Activated naive CD4-positive, alpha-beta T cell treated with anti-CD3 and anti-CD28 coated beads for 36 hours (primary cell): ENCODE measurements at regions of chr1 and their contacts with region 1.

Region 1: DNA sequence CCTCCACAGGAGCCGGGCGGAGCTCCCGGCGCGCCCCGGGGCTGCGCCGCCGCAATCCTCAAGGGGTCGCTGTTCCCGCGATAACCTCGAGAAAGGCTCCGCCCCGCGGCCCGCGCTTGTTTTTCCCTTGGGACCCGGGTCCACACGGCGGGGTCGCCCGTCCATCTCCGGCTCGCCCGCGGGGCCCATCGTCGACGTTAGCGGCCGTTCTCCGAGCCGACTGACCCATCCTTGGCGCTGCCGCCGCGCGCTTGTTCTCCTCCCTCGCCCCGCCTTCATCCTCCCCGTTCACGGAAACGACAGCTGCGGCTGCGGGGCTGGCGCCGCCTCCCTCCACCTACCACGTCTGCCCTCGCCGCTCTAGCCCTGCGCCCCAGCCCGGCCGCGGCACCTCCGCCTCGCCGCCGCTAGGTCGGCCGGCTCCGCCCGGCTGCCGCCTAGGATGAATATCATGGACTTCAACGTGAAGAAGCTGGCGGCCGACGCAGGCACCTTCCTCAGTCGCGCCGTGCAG is at the start of gene SH3GLB1:
- DNase-seq: peak; percentile 90
- H3K4me3 Mint-ChIP-seq: peak within 1 kb of the TSS; percentile 93
- H3K27ac Mint-ChIP-seq: peak within 1 kb of the TSS; percentile 98
- H3K4me1 Mint-ChIP-seq: peaks cover 40% of the 10 kb centered on the region
- H3K27me3 Mint-ChIP-seq: no peaks in the 10 kb centered on the region
- total RNA-seq, gene SH3GLB1: 45.0 to 45.5 TPM

Region 2: GRCh38 chr1:85707990-85708828 is 996.3 kb before region 1 on chr1 and contains the start of gene ZNHIT6:
- CTCF ChIA-PET with region 1: no interaction called
- intact Hi-C with region 1: loop called (anchors 1 kb)
- DNase-seq: peak; percentile 93
- H3K4me3 Mint-ChIP-seq: no peak within 1 kb of the TSS
- H3K27ac Mint-ChIP-seq: no peak within 1 kb of the TSS
- H3K4me1 Mint-ChIP-seq: peaks cover 21% of the 10 kb centered on the region
- H3K27me3 Mint-ChIP-seq: no peaks in the 10 kb centered on the region
- total RNA-seq, gene ZNHIT6: 19.8 to 19.9 TPM

Region 3: DNA sequence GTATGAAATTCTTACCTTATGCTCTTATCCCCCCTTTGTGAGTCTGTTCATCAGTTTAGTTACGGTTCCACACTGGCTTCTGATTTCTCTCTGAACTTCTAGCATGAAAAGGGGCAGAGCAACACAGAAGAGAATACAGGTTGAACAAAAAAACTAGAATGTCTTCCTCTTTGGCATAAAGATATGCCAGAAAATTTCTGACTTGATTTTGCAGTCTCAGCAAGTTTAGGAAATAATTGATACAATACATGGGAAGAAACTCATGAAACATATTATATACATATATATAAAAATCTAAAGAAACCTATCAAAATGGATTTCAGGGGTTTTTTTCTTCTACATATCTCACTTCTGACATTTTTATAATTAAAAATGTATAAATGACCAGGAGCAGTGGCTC is 26.9 kb after region 1 on chr1:
- CTCF ChIA-PET with region 1: interaction called, 5 read pairs
- intact Hi-C with region 1: loop called (anchors 2 kb)
- DNase-seq: no peak
- H3K4me3 Mint-ChIP-seq: no peak overlapping the region
- H3K27ac Mint-ChIP-seq: no peak overlapping the region
- H3K4me1 Mint-ChIP-seq: peaks cover 8% of the 10 kb centered on the region
- H3K27me3 Mint-ChIP-seq: no peaks in the 10 kb centered on the region

Region 4: DNA sequence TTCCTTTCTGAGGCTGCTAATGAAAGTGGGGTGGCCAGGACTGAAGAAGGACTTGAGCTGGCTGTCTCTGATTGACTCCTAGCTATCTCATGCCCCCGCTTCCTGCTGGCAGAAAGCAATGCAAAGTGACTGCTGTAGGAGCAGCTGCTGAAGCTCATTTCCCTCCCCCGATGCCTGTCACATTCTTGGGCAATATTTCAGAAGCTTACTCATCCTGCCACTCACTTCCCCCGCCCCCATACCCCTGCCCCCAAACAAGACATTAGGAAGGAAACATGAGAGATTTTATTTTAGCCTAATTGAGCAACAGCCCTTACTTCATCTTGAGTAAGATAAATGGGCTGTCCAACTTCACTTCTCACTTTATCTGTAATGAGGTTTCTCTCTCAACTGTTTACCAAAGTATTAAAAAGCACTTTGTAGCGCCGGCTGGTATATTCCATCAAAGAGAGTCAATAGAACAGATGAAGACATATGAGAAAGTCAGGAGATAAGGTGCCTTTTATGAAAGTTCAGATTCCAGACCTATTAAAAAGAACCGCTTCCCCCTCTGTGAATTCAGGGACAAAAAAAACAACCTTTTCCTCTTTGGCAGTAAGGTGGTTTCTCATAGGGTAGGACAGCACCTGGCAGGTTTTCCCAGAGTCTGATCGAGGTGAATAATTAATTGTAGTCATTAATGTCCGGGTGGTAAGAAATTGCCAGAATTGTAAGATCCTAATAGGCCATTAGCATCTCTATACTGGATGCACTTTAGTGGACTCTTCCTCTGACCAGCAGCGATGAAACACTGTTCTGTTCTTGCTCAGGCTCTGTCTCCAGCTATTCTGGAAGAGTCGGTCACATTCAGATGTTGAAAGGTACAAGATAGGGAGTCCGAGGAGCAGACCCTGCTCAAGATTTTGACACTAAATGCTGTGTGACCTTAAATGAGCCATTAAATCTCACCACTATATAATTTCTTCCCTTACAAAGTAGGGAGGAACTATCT is 70.1 kb after region 1 on chr1:
- CTCF ChIA-PET with region 1: interaction called, 3 read pairs
- intact Hi-C with region 1: loop called (anchors 1 kb)
- DNase-seq: peak; percentile 81
- H3K4me3 Mint-ChIP-seq: no peak overlapping the region
- H3K27ac Mint-ChIP-seq: peak overlapping the region; percentile 17
- H3K4me1 Mint-ChIP-seq: peaks cover 15% of the 10 kb centered on the region
- H3K27me3 Mint-ChIP-seq: no peaks in the 10 kb centered on the region

Region 5: DNA sequence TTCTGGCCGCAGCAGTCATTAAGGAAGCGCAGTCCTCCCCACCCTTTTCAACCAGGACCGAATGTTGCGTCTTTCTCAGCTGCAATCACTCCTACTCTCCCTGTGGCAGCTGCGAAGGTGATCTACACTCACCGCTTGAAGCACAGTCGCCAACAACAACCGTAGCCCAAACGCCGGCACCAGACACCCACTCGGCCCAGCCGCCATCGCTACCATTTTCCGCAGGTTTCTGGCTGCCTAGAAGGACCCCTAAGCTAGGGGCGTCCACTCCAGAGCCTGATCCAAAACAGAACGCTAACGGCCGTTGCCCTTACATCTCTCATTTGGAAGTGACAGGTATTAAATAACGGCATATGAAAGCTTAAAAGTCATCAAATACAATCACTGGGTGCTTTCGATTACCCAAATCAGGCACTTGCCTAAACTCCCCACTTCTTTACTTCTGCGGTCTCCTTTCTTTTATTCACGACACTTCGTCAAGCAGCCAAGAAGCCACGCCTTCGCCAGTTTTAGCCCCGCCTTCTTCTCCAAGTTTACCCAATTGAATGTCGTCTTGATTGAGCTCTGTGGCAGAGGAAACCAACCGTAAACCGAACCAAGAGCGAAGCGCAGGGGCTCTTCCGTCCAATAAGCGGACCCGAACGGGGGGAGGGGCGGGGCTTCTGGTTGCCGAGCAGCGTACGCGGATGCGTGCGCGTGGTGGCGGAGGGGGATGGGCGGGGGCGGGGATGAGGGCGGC is 209.6 kb after region 1 on chr1 and contains the start of gene SELENOF:
- CTCF ChIA-PET with region 1: interaction called, 9 read pairs
- intact Hi-C with region 1: loop called (anchors 1 kb)
- DNase-seq: peak; percentile 100
- H3K4me3 Mint-ChIP-seq: no peak within 1 kb of the TSS
- H3K27ac Mint-ChIP-seq: peak within 1 kb of the TSS; percentile 53
- H3K4me1 Mint-ChIP-seq: peaks cover 47% of the 10 kb centered on the region
- H3K27me3 Mint-ChIP-seq: no peaks in the 10 kb centered on the region
- total RNA-seq, gene SELENOF: 111 to 115 TPM

Region 6: DNA sequence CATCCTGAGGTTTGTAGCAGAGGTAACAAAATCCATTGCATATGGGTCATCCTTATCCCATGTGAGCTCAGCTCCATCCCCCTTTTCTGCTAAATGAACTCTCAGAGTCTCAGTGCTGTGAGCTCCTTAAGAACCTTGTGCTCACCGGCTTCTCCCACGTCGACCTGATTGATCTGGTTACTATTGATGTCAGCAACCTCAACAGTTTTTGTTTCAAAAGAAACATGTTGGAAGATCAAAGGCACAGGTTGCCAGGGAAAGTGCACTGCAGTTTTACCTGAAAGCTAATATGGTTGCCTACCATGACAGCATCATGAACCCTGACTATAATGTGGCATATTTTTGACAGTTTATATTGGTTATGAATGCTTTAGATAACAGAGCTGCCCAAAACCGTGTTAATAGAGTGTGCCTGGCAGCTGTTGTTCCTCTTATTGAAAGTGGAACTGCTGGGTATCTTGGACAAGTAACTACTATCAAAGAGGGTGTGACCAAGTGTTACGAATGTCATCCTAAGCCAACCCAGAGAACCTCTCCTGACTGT is 341.3 kb after region 1 on chr1:
- CTCF ChIA-PET with region 1: interaction called, 4 read pairs
- intact Hi-C with region 1: loop called (anchors 1 kb)
- DNase-seq: peak; percentile 82
- H3K4me3 Mint-ChIP-seq: peak overlapping the region; percentile 33
- H3K27ac Mint-ChIP-seq: peak overlapping the region; percentile 79
- H3K4me1 Mint-ChIP-seq: peaks cover 45% of the 10 kb centered on the region
- H3K27me3 Mint-ChIP-seq: no peaks in the 10 kb centered on the region